ENCODE measurements at regions of chr14 and their contacts with region 1.

Region 1: GRCh38 chr14:24070285-24071143 is 848 bp upstream of the CPNE6 start:
- DNase-seq: no peak
- ATAC-seq: no peak
- H3K4me3 ChIP-seq: no peak overlapping the region
- H3K27ac ChIP-seq: no peak overlapping the region
- H3K4me1 ChIP-seq: no peaks in the 10 kb centered on the region
- H3K27me3 ChIP-seq: no peaks in the 10 kb centered on the region
- CTCF ChIP-seq: no peak

Region 2: DNA sequence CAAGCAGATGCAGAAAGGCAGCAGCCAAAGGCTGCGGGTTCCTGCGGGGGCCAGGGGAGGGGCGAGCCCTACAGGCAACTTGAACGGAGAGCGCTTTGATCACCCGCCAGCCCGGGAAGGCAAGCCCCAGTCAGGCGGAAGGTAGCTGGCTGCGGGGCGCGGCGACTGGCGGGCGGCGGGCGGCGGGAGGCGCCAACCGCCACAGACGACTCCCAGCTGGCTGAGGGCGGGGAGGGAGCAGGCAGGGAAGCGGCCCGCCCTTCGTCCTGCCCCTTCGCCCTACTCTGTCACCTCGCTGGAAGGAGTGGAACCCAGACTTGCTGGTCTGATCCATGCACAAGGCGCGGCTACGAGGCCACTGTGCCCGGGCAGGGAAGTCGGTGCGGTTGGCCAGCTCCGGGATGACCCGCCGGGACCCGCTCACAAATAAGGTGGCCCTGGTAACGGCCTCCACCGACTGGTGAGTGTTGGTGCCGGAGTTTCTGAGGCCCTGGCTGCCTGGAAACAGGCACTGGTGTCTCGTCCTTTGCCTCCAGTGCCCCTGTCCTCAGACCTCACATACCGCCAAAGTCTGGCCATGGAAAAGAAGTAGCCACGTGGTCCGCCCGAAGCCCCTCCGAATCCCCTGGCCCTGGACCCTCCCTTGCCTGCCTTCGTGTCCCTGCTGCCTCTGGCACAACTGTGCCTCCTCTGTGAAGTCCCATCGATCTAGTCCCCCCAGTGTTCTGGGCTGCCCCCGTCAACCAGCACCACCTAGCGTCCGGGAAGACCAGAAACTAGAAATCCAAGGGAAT is 34.1 kb before region 1 on chr14:
- CTCF ChIA-PET with region 1: no interaction called
- POLR2A ChIA-PET with region 1: interaction called, 18 read pairs
- in situ Hi-C with region 1: no loop called
- intact Hi-C with region 1: no loop called
- DNase-seq: no peak
- ATAC-seq: peak; percentile 98
- H3K4me3 ChIP-seq: peak overlapping the region; percentile 48 to 57
- H3K27ac ChIP-seq: peak overlapping the region; percentile 54; the same call in 1 of the 2 replicates
- H3K4me1 ChIP-seq: no peaks in the 10 kb centered on the region
- H3K27me3 ChIP-seq: no peaks in the 10 kb centered on the region
- CTCF ChIP-seq: peak; percentile 85

Region 3: GRCh38 chr14:24343795-24344660 is 273.5 kb after region 1 on chr14:
- CTCF ChIA-PET with region 1: no interaction called
- POLR2A ChIA-PET with region 1: no interaction called
- in situ Hi-C with region 1: no loop called
- intact Hi-C with region 1: no loop called
- DNase-seq: no peak
- ATAC-seq: no peak
- H3K4me3 ChIP-seq: no peak overlapping the region
- H3K27ac ChIP-seq: no peak overlapping the region
- H3K4me1 ChIP-seq: no peaks in the 10 kb centered on the region
- H3K27me3 ChIP-seq: no peaks in the 10 kb centered on the region; the same call in 1 of the 2 replicates
- CTCF ChIP-seq: no peak

Measured in Panc1 (cell line).